T-cell (primary cell): ENCODE measurements at regions of chr5 and their contacts with region 1.

Region 1: GRCh38 chr5:14879937-14880589 is 8.5 kb upstream of the ANKH start:
- DNase-seq: no peak
- ATAC-seq: no peak
- H3K4me3 ChIP-seq: no peak overlapping the region
- H3K4me3 Mint-ChIP-seq: no peak overlapping the region
- H3K27ac ChIP-seq: no peak overlapping the region
- H3K27ac Mint-ChIP-seq: no peak overlapping the region
- H3K4me1 ChIP-seq: no peaks in the 10 kb centered on the region
- H3K4me1 Mint-ChIP-seq: peaks cover 3 to 6% (median 6%) of the 10 kb centered on the region in 3 donors
- H3K27me3 ChIP-seq: peaks cover 0 to 13% of the 10 kb centered on the region in 2 experiments
- H3K27me3 Mint-ChIP-seq: peaks cover 5 to 9% of the 10 kb centered on the region in 2 donors

Region 2: GRCh38 chr5:14218897-14219580 is 661.0 kb before region 1 on chr5:
- CTCF ChIA-PET with region 1: no interaction called
- POLR2A ChIA-PET with region 1: no interaction called
- DNase-seq: no peak
- ATAC-seq: no peak
- H3K4me3 ChIP-seq: no peak overlapping the region
- H3K4me3 Mint-ChIP-seq: no peak overlapping the region
- H3K27ac ChIP-seq: no peak overlapping the region
- H3K27ac Mint-ChIP-seq: no peak overlapping the region
- H3K4me1 ChIP-seq: peaks cover 12 to 23% of the 10 kb centered on the region in 2 experiments
- H3K4me1 Mint-ChIP-seq: peaks cover 7 to 14% (median 13%) of the 10 kb centered on the region in 3 donors
- H3K27me3 ChIP-seq: peaks cover 0 to 11% of the 10 kb centered on the region in 2 experiments
- H3K27me3 Mint-ChIP-seq: peaks cover 21 to 31% of the 10 kb centered on the region in 2 donors

Region 3: GRCh38 chr5:14928661-14929060 is 48.6 kb after region 1 on chr5:
- CTCF ChIA-PET with region 1: no interaction called
- POLR2A ChIA-PET with region 1: interaction called, 7 to 10 read pairs
- DNase-seq: no peak
- ATAC-seq: no peak
- H3K4me3 ChIP-seq: no peak overlapping the region
- H3K4me3 Mint-ChIP-seq: no peak overlapping the region
- H3K27ac ChIP-seq: no peak overlapping the region
- H3K27ac Mint-ChIP-seq: no peak overlapping the region
- H3K4me1 ChIP-seq: peaks cover 13 to 15% of the 10 kb centered on the region in 2 experiments
- H3K4me1 Mint-ChIP-seq: peaks cover 16 to 33% (median 29%) of the 10 kb centered on the region in 3 donors
- H3K27me3 ChIP-seq: no peaks in the 10 kb centered on the region
- H3K27me3 Mint-ChIP-seq: no peaks in the 10 kb centered on the region

Region 4: DNA sequence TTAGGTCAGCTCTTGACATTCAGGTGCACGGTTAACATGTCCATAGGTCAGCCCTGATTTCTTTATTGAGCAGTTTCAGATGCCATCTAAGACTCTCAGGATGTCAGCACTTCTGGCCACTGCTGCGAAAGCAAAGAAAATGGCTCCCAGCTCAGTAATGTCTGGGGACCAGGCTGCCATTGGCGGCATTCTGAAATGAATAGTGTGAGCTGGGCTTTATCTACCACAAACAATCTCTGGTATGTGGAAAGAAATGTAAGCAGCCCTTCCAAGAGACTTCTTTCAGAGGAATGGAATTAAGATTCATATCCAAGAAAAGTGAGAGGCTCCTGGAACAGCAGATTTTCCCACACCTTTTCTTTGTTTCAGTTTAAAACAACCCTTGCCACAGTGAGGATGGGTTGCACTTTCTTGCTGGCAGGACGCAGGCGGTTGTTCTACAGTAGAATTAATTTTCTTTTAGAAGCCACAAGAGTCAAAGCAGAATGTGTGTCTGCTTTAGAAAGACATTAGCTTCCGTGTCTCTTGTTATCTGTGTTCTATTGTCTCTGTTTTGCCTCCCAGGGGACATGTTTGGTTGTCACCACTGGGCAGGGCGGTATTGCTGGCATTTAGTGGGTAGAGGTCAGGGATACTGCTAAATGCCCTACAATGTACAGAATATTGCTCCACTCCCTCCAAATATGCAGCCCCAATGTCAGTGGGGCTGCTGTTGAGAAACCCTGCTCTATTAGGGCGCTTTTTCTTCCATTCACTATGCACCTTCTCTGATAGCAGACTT is 141.4 kb after region 1 on chr5:
- CTCF ChIA-PET with region 1: no interaction called
- POLR2A ChIA-PET with region 1: no interaction called
- DNase-seq: no peak
- ATAC-seq: no peak
- H3K4me3 ChIP-seq: no peak overlapping the region
- H3K4me3 Mint-ChIP-seq: no peak overlapping the region
- H3K27ac ChIP-seq: no peak overlapping the region
- H3K27ac Mint-ChIP-seq: no peak overlapping the region
- H3K4me1 ChIP-seq: no peaks in the 10 kb centered on the region
- H3K4me1 Mint-ChIP-seq: no peaks in the 10 kb centered on the region
- H3K27me3 ChIP-seq: peaks cover 0 to 3% of the 10 kb centered on the region in 2 experiments
- H3K27me3 Mint-ChIP-seq: peaks cover 12 to 14% of the 10 kb centered on the region in 2 donors

Region 5: DNA sequence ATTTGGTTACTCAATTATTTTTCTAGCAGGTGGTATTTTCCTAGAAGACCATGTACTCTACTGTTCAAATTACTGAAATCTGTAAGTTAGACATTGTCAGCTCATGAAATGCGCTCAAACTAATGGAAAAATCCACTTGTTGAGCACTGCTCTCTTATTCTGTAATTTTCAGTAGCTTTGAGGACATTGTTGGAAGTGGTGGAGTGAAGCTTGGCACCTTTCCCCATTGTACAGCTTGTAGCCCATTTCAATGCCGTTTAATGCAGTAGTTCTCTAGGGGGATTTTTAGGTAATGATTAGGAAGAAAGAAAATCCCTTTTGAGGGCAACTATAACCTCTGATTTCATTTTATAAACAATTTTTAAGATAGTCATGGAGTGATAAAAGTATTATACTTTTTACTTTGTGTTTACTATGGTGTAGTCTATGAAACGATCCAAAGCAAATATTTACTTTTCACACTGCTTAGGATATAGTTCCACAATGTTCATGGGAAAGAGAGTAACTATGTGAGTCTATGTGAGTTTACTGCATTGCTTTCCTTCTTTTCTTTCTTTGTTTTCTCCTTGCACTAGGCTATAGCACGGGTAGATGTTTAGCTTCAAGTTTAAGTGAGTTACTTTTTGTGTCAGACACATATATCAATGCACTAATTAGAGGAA is 157.3 kb after region 1 on chr5:
- CTCF ChIA-PET with region 1: interaction called in 1 of 2 experiments, 11 read pairs
- POLR2A ChIA-PET with region 1: no interaction called
- DNase-seq: no peak
- ATAC-seq: no peak
- H3K4me3 ChIP-seq: no peak overlapping the region
- H3K4me3 Mint-ChIP-seq: no peak overlapping the region
- H3K27ac ChIP-seq: no peak overlapping the region
- H3K27ac Mint-ChIP-seq: no peak overlapping the region
- H3K4me1 ChIP-seq: no peaks in the 10 kb centered on the region
- H3K4me1 Mint-ChIP-seq: no peaks in the 10 kb centered on the region
- H3K27me3 ChIP-seq: peaks cover 0 to 2% of the 10 kb centered on the region in 2 experiments
- H3K27me3 Mint-ChIP-seq: peaks cover 11 to 21% of the 10 kb centered on the region in 2 donors